GM12878 (cell line): ENCODE measurements at regions of chr1 and their contacts with region 1.

Region 1: GRCh38 chr1:99270646-99271045 is 6.4 kb downstream of the PLPPR4 start:
- DNase-seq: no peak
- ATAC-seq: no peak
- H3K4me3 ChIP-seq: no peak overlapping the region
- H3K27ac ChIP-seq: no peak overlapping the region
- H3K4me1 ChIP-seq: no peaks in the 10 kb centered on the region
- H3K27me3 ChIP-seq: no peaks in the 10 kb centered on the region
- CTCF ChIP-seq: no peak
- EP300 ChIP-seq: no peak
- POLR2A ChIP-seq: no peak
- RAD21 ChIP-seq: no peak

Region 2: GRCh38 chr1:99326215-99326949 is 55.7 kb after region 1 on chr1:
- CTCF ChIA-PET with region 1: no interaction called
- POLR2A ChIA-PET with region 1: no interaction called
- RAD21 ChIA-PET with region 1: no interaction called
- SMC1A ChIA-PET with region 1: no interaction called
- in situ Hi-C with region 1: no loop called
- intact Hi-C with region 1: loop called (anchors 5 kb)
- DNase-seq: no peak
- ATAC-seq: 0 out of 3 replicates have a peak, but pooled peaks have one; percentile 22
- H3K4me3 ChIP-seq: no peak overlapping the region
- H3K27ac ChIP-seq: no peak overlapping the region
- H3K4me1 ChIP-seq: no peaks in the 10 kb centered on the region
- H3K27me3 ChIP-seq: no peaks in the 10 kb centered on the region
- CTCF ChIP-seq: peak in 2 of 3 experiments; percentile 25 to 45; a peak in 3 of 6 replicates
- EP300 ChIP-seq: no peak
- POLR2A ChIP-seq: no peak
- RAD21 ChIP-seq: no peak